A673 (cell line): ENCODE measurements at regions of chr11 and their contacts with region 1.

Region 1: DNA sequence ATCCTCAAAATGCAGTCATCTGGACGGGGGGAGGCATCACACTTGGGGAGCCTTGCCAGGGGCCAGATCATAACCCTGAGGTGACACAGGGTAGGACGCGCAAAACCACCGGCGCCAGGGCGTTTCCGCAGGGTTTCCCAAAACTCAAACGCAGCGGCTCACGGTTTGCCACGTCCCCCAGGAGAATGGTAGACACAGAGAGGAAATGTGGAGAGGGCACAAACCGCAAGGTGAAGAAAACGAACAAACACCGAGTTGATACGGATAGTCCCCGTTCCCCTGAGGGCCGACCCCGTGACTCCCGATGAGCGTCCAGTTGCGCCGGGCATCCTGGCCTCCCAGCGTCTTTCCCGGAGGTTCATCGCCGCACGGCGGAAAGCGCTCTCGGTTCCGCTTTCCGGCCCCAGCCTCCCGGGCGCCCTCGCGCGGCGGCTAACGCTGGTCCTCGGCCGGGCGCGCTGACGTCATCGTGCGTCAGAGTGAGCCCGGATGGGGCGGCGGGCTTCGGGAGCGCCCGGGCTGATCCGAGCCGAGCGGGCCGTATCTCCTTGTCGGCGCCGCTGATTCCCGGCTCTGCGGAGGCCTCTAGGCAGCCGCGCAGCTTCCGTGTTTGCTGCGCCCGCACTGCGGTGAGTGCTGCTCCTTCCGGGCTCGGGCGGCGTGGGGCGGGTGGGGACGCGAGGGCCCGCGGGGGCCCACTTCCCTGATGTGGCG is at the start of gene BIRC2:
- DNase-seq: peak; percentile 98
- H3K4me3 ChIP-seq: peak within 1 kb of the TSS; percentile 59
- H3K27ac ChIP-seq: peak within 1 kb of the TSS; percentile 94
- H3K4me1 ChIP-seq: peaks cover 7% of the 10 kb centered on the region
- H3K27me3 ChIP-seq: no peaks in the 10 kb centered on the region
- CTCF ChIP-seq: peak; percentile 90
- total RNA-seq, gene BIRC2: 32.0 and 36.3 TPM in 2 replicates

Region 2: GRCh38 chr11:102293873-102294601 is 52.9 kb before region 1 on chr11:
- CTCF ChIA-PET with region 1: no interaction called
- POLR2A ChIA-PET with region 1: no interaction called
- intact Hi-C with region 1: loop called (anchors 1 kb)
- DNase-seq: peak; percentile 68
- H3K4me3 ChIP-seq: no peak overlapping the region
- H3K27ac ChIP-seq: no peak overlapping the region
- H3K4me1 ChIP-seq: peaks cover 9% of the 10 kb centered on the region
- H3K27me3 ChIP-seq: no peaks in the 10 kb centered on the region
- CTCF ChIP-seq: peak; percentile 78

Region 3: DNA sequence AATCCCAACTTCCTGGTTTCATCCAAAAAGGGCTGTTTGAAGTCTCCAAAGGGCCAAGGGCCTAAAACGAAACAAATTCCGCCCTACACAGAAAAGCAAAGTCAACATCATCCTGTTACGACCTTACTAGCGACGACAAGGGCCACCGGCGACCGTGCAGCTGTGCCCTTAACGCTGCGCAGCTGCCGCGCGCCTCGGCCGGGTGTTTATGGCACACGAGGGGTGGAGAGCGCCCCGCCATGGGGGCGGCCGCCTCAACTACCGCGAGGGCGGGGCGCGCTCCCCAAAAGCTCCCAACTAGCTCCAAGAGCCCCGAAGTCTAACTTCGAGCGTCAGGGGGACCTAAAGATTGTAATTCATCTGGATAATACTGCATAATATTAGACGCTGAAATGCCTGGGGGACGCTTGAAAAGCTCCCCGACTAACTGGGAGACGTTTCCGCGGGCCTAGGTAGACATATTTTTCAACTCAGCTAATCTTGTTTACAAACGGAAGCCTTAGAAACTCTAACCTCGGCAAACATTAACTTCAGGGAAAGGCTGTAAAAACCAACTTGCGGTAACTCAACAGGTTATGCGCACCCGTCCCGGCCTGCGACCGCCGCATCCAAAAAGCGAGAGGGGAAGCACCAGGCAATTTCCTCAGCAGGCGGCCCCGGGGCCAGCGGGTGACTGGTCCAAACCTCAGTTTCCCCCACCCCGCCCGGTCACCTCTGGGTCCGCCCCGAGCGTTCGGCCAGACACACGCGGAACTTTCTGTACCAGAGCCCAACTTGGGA is 105.0 kb after region 1 on chr11:
- CTCF ChIA-PET with region 1: no interaction called
- POLR2A ChIA-PET with region 1: no interaction called
- intact Hi-C with region 1: loop called (anchors 5 kb)
- DNase-seq: peak; percentile 83
- H3K4me3 ChIP-seq: peak overlapping the region; percentile 83
- H3K27ac ChIP-seq: peak overlapping the region; percentile 89
- H3K4me1 ChIP-seq: peaks cover 52% of the 10 kb centered on the region
- H3K27me3 ChIP-seq: no peaks in the 10 kb centered on the region
- CTCF ChIP-seq: peak; percentile 40